Activated CD4-positive, alpha-beta T cell treated with anti-CD3 and anti-CD28 coated beads, Interleukin-2, amount 10 ng/mL, durations not matched to agents 24 days and 14 days (primary cell): ENCODE measurements at regions of chr7 and their contacts with region 1.

Region 1: GRCh38 chr7:130084037-130084875 is 13.9 kb downstream of the KLHDC10 start:
- DNase-seq: no peak
- H3K4me3 Mint-ChIP-seq: no peak overlapping the region
- H3K27ac Mint-ChIP-seq: no peak overlapping the region
- H3K4me1 Mint-ChIP-seq: peaks cover 11% of the 10 kb centered on the region
- H3K27me3 Mint-ChIP-seq: no peaks in the 10 kb centered on the region

Region 2: GRCh38 chr7:130047821-130048220 is 36.4 kb before region 1 on chr7:
- intact Hi-C with region 1: no loop called
- DNase-seq: no peak
- H3K4me3 Mint-ChIP-seq: no peak overlapping the region
- H3K27ac Mint-ChIP-seq: no peak overlapping the region
- H3K4me1 Mint-ChIP-seq: peaks cover 6% of the 10 kb centered on the region
- H3K27me3 Mint-ChIP-seq: no peaks in the 10 kb centered on the region

Region 3: GRCh38 chr7:130124711-130125110 is 40.5 kb after region 1 on chr7:
- intact Hi-C with region 1: loop called (anchors 5 kb)
- DNase-seq: no peak
- H3K4me3 Mint-ChIP-seq: no peak overlapping the region
- H3K27ac Mint-ChIP-seq: no peak overlapping the region
- H3K4me1 Mint-ChIP-seq: peaks cover 6% of the 10 kb centered on the region
- H3K27me3 Mint-ChIP-seq: no peaks in the 10 kb centered on the region

Region 4: DNA sequence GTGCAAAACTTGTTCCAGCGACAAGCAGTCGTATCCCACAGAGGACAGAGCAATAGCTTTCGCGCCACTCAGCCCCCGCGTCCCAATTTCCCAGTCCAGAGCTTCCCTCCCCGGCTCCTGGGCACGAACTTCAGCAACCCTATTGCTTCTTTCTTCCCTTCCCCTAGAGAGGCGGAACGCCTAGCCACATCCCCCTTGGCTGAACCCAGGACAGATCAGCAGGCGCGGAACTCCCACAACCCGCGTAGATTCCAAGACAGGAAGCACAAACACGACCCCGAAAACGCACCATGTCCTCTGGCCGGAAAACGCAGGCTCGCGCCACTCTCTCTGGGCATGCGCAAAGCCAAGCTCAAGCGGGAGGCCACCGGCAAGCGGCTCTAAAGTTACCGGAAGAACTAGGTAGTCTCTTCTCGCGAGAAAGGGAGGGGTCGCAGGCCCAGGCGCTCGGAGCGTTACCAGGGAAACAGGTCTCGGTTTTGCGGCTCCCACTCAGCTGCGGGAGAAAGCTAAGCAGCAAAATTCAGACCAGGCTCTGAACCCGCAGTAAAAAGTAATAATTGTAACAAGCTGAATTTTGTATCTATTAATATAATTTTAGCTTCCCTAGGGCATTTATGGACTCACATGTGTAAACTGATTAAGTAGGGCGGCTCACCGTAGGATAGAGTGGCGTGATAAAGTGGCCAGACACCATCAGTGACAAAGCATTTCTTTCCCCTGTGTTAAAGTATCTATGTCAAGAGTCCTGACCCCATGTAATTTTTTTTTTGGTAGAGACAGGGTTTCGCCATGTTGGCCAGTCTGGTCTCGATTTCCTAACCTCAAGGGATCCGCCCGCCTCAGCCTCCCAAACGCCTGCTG is 121.1 kb after region 1 on chr7 and contains the start of gene TMEM209:
- intact Hi-C with region 1: no loop called
- DNase-seq: peak; percentile 98
- H3K4me3 Mint-ChIP-seq: peak within 1 kb of the TSS; percentile 93
- H3K27ac Mint-ChIP-seq: peak within 1 kb of the TSS; percentile 98
- H3K4me1 Mint-ChIP-seq: peaks cover 25% of the 10 kb centered on the region
- H3K27me3 Mint-ChIP-seq: no peaks in the 10 kb centered on the region
- total RNA-seq, gene TMEM209: 48.2 and 52.9 TPM in 2 replicates